ENCODE measurements at regions of chr16 and their contacts with region 1.

Region 1: DNA sequence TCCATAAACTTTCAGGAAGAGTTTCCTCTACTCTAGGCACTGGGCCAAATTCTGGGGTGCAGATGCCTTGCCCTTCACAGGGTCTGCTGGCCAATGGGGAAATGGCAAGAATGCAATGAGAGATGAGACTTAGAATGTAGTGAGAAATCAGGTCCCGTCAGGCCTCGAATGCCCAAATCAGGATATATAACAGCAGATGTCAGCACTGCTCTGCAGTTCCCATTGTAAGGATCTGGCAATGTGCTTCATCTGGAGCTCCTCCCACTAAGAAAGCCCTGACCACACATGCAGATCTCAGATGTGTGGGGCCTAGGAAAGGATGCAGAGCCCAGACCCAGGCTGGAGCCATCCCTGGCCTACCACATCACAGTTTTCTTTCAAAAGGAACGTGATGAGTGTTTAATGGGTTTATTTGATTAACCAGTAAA is 13.9 kb upstream of the LPCAT2 start:
- DNase-seq: peak; percentile 49
- ATAC-seq: peak; percentile 47
- H3K4me3 ChIP-seq: no peak overlapping the region
- H3K27ac ChIP-seq: no peak overlapping the region
- H3K4me1 ChIP-seq: peaks cover 38% of the 10 kb centered on the region
- H3K27me3 ChIP-seq: no peaks in the 10 kb centered on the region
- CTCF ChIP-seq: peak; percentile 64
- EP300 ChIP-seq: no peak
- POLR2A ChIP-seq: no peak
- RAD21 ChIP-seq: peak; percentile 15; the same call in 1 of the 2 replicates

Region 2: DNA sequence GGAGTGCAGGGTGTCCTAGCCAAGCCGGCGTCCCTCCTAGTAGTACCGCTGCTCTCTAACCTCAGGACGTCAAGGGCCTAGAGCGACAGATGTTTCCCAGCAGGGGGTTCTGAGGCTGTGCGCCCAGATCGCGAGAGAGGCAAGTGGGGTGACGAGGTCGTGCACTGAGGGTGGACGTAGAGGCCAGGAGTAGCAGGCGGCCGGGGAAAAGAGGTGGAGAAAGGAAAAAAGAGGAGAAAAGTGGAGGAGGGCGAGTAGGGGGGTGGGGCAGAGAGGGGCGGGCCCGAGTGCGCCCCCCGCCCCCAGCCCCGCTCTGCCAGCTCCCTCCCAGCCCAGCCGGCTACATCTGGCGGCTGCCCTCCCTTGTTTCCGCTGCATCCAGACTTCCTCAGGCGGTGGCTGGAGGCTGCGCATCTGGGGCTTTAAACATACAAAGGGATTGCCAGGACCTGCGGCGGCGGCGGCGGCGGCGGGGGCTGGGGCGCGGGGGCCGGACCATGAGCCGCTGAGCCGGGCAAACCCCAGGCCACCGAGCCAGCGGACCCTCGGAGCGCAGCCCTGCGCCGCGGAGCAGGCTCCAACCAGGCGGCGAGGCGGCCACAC is 16.1 kb before region 1 on chr16 and contains the start of gene MMP2:
- CTCF ChIA-PET with region 1: no interaction called
- POLR2A ChIA-PET with region 1: no interaction called
- in situ Hi-C with region 1: no loop called
- intact Hi-C with region 1: no loop called
- DNase-seq: no peak
- ATAC-seq: peak; percentile 58
- H3K4me3 ChIP-seq: peak within 1 kb of the TSS; percentile 31 to 66 (median 42); a peak in 5 of 6 replicates
- H3K27ac ChIP-seq: no peak within 1 kb of the TSS
- H3K4me1 ChIP-seq: peaks cover 15% of the 10 kb centered on the region
- H3K27me3 ChIP-seq: peaks cover 4 to 42% of the 10 kb centered on the region in 2 experiments; a peak in 4 of 5 replicates
- CTCF ChIP-seq: no peak
- EP300 ChIP-seq: no peak
- POLR2A ChIP-seq: no peak
- RAD21 ChIP-seq: no peak
- total RNA-seq, gene MMP2: 0.29 and 0.31 TPM in 2 replicates

Region 3: DNA sequence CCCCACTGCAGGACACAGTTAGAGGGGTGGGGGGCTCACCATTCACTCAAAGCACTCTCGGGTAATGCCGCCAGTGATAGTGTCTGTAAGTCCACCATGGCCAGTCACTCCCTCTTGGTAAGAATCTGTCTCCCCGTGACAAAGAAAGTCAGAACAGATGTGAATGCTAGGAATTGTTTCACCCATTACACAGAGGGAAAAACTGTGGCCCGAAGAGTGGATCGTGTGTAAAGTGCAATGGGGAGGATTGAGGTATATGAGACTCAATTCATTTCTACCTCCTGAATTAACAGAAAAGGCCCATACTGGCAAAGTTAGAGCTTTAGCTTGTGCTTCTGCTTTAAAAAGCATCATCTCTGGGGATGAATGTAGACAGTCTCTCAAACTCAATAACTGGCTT is 143.2 kb after region 1 on chr16:
- CTCF ChIA-PET with region 1: no interaction called
- POLR2A ChIA-PET with region 1: no interaction called
- in situ Hi-C with region 1: loop called (anchors 5 kb)
- intact Hi-C with region 1: no loop called
- DNase-seq: no peak
- ATAC-seq: no peak
- H3K4me3 ChIP-seq: no peak overlapping the region
- H3K27ac ChIP-seq: no peak overlapping the region
- H3K4me1 ChIP-seq: peaks cover 78% of the 10 kb centered on the region
- H3K27me3 ChIP-seq: no peaks in the 10 kb centered on the region
- CTCF ChIP-seq: no peak
- EP300 ChIP-seq: no peak
- POLR2A ChIP-seq: no peak
- RAD21 ChIP-seq: no peak

Measured in HepG2 (cell line).